ENCODE measurements at regions of chr1 and their contacts with region 1.

Region 1: GRCh38 chr1:99808391-99809115 is 41.6 kb upstream of the AGL start:
- DNase-seq: peak; percentile 49 to 58
- H3K4me3 ChIP-seq: no peak overlapping the region
- H3K4me3 Mint-ChIP-seq: no peak overlapping the region
- H3K27ac Mint-ChIP-seq: no peak overlapping the region
- H3K4me1 ChIP-seq: 0 out of 2 replicates have a peak, but pooled peaks cover 3% of the 10 kb centered on the region
- H3K4me1 Mint-ChIP-seq: no peaks in the 10 kb centered on the region
- H3K27me3 ChIP-seq: no peaks in the 10 kb centered on the region
- H3K27me3 Mint-ChIP-seq: no peaks in the 10 kb centered on the region
- CTCF ChIP-seq: peak in 1 of 2 experiments; percentile 3

Region 2: GRCh38 chr1:99849744-99850458 is 41.3 kb after region 1 on chr1 and contains the start of gene AGL:
- CTCF ChIA-PET with region 1: no interaction called
- POLR2A ChIA-PET with region 1: no interaction called
- intact Hi-C with region 1: loop called (anchors 1 kb)
- DNase-seq: peak; percentile 92
- H3K4me3 ChIP-seq: peak within 1 kb of the TSS; percentile 83
- H3K4me3 Mint-ChIP-seq: peak within 1 kb of the TSS; percentile 95
- H3K27ac Mint-ChIP-seq: peak within 1 kb of the TSS; percentile 93
- H3K4me1 ChIP-seq: 0 out of 2 replicates have a peak, but pooled peaks cover 4% of the 10 kb centered on the region
- H3K4me1 Mint-ChIP-seq: peaks cover 24% of the 10 kb centered on the region
- H3K27me3 ChIP-seq: no peaks in the 10 kb centered on the region
- H3K27me3 Mint-ChIP-seq: no peaks in the 10 kb centered on the region
- CTCF ChIP-seq: no peak
- total RNA-seq, gene AGL: 23.6 and 24.2 TPM in 2 replicates

Region 3: DNA sequence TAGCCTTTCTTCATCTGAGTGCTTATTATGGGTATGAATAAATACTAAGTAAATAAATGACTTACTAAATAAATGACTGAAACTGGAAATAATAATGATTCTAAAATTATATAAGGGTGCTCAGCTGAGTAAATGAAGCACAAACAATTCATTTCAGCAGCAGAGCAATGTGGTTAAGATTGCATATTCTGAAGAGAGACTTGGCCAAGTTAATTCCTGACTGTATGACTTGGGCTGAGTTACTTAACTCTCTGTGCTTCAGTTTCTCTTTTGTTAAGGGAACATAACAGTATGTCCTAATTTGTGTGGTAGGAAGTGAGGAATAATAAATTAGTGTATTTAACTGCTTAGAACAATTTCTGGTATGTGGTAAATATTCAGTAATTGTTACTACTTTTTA is 60.8 kb after region 1 on chr1:
- CTCF ChIA-PET with region 1: no interaction called
- POLR2A ChIA-PET with region 1: no interaction called
- intact Hi-C with region 1: no loop called
- DNase-seq: no peak
- H3K4me3 ChIP-seq: no peak overlapping the region
- H3K4me3 Mint-ChIP-seq: no peak overlapping the region
- H3K27ac Mint-ChIP-seq: no peak overlapping the region
- H3K4me1 ChIP-seq: no peaks in the 10 kb centered on the region
- H3K4me1 Mint-ChIP-seq: no peaks in the 10 kb centered on the region
- H3K27me3 ChIP-seq: no peaks in the 10 kb centered on the region
- H3K27me3 Mint-ChIP-seq: no peaks in the 10 kb centered on the region
- CTCF ChIP-seq: no peak